ENCODE measurements at regions of chr12 and their contacts with region 1.

Region 1: DNA sequence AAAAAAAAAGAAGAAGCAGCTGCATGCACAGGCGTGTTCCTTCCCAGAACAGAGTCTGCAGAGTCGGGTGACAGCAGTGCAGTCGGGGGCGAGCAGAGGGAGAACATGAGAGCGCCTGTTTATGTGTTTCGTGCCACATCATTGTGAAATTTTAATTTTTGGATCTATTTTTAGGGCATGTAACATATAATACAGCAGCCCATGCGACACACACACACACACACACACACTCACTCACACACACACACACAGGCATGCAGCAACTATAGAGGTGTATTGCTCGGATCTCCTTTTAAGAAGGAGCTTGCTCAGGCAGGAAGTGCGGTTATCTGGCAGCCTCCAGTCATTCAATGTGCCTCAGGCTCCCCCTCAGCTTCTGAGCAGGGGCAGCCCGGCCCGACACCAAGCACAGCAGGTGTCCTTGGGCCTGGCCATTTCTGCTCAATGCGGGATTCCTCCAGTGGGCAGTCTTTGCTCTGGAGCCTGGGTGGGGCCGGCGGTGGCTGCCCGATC is 71.8 kb downstream of the ZNF664 start:
- DNase-seq: no peak
- H3K4me3 ChIP-seq: no peak overlapping the region
- H3K4me3 Mint-ChIP-seq: no peak overlapping the region
- H3K27ac ChIP-seq: no peak overlapping the region
- H3K27ac Mint-ChIP-seq: no peak overlapping the region
- H3K4me1 ChIP-seq: peaks cover 0 to 4% of the 10 kb centered on the region in 2 donors
- H3K4me1 Mint-ChIP-seq: peaks cover 7% of the 10 kb centered on the region
- H3K27me3 ChIP-seq: no peaks in the 10 kb centered on the region
- H3K27me3 Mint-ChIP-seq: peaks cover 0 to 4% (median 0%) of the 10 kb centered on the region in 3 donors
- CTCF ChIP-seq: no peak

Region 2: DNA sequence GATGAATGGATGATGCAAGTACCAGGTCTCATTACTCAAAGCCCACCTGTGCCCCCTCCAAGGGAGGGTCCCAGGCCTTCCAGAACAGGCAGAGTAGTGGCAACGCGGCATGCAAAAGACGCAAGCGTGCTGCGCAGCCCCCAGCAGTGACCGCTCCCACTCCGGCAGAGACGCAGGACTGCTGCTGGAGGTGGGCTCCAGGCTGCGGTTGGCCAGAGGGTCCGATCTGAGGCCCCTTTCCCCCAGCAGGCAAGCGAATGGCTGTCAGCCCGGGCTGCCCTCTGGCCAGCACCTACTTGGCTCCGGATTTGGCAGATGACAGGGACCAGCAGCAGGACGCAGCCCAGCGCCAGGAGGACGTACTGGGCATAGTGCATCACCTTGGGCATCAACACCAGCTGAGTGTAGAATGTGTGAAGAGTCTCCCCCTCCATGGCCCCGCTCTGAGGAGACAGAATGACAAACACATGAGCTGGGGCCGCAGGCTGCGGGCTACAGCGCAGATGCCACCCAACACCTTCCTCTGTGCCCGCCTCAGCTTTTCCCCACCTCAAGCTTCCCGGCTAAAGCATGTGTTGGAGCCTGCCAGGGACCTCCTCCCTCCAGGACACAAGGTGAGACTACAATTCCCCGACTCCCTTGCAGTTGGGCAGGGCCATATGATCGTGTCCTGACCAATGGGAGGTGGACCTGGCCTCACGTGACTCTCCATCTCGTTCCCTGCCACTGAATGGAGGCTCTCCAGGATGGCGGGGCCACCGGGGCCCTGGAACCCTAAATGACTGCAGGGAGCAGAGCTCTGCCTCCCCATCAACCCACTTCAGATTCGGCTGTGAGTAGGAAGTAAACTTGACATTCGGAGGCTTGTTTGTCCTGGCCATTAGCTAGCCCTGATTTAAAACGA is 741.4 kb after region 1 on chr12:
- intact Hi-C with region 1: loop called in 1 of 2 experiments (anchors 10 kb)
- DNase-seq: no peak
- H3K4me3 ChIP-seq: no peak overlapping the region
- H3K4me3 Mint-ChIP-seq: no peak overlapping the region
- H3K27ac ChIP-seq: no peak overlapping the region
- H3K27ac Mint-ChIP-seq: peak overlapping the region in 1 of 7 donors; percentile 50
- H3K4me1 ChIP-seq: no peaks in the 10 kb centered on the region
- H3K4me1 Mint-ChIP-seq: peaks cover 3% of the 10 kb centered on the region
- H3K27me3 ChIP-seq: no peaks in the 10 kb centered on the region
- H3K27me3 Mint-ChIP-seq: peaks cover 0 to 1% (median 0%) of the 10 kb centered on the region in 3 donors
- CTCF ChIP-seq: no peak